MCF 10A (cell line): ENCODE measurements at regions of chr7 and their contacts with region 1.

Region 1: DNA sequence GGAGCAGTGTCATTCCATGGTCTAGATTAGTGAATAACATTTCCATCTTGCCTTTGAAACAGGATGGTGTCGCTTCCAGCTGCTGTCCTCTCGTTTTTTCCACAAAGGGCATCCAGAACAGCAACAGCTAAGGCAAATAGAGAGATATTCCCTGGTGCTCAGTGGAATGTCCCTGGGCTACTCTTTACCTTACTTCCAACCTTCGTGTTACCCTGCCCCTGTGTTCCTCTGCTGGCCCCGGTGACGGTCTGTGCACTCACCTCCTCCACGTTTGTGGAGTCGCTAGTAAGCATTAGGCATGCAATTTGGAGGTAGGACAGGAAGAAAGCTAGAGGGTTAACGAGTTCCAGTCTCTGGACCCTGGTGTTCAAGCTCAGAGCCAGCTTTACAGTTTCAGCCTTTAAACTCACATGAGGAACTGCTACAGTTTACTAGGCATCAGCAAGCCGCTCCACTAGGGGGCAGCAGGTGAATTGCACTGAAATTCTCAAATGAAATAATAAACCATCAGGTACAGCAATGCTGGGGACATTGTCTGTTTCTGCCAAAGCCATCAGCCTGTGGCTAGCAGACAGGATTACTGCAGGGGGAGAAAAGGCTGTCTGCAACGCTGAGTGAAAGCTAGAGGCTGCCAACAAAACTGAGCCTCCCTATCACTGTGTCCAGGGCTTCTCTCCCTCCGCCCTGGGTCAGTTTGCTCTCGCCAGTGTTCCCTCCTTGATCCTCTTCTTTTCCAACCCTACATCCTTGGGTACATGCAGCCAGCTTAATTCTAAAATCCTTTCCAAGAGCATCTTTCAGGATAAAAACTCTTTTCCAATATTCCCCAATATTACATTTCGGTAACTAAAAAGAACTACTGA is 9.0 kb downstream of the MRPL32 start:
- DNase-seq: peak; percentile 76
- H3K4me3 Mint-ChIP-seq: no peak overlapping the region
- H3K27ac Mint-ChIP-seq: no peak overlapping the region
- H3K4me1 Mint-ChIP-seq: no peaks in the 10 kb centered on the region
- H3K27me3 Mint-ChIP-seq: no peaks in the 10 kb centered on the region
- CTCF ChIP-seq: peak; percentile 89

Region 2: GRCh38 chr7:42961170-42961569 is 20.0 kb after region 1 on chr7:
- CTCF ChIA-PET with region 1: interaction called, 10 read pairs
- POLR2A ChIA-PET with region 1: no interaction called
- intact Hi-C with region 1: no loop called
- DNase-seq: no peak
- H3K4me3 Mint-ChIP-seq: no peak overlapping the region
- H3K27ac Mint-ChIP-seq: no peak overlapping the region
- H3K4me1 Mint-ChIP-seq: peaks cover 22% of the 10 kb centered on the region
- H3K27me3 Mint-ChIP-seq: no peaks in the 10 kb centered on the region
- CTCF ChIP-seq: no peak

Region 3: DNA sequence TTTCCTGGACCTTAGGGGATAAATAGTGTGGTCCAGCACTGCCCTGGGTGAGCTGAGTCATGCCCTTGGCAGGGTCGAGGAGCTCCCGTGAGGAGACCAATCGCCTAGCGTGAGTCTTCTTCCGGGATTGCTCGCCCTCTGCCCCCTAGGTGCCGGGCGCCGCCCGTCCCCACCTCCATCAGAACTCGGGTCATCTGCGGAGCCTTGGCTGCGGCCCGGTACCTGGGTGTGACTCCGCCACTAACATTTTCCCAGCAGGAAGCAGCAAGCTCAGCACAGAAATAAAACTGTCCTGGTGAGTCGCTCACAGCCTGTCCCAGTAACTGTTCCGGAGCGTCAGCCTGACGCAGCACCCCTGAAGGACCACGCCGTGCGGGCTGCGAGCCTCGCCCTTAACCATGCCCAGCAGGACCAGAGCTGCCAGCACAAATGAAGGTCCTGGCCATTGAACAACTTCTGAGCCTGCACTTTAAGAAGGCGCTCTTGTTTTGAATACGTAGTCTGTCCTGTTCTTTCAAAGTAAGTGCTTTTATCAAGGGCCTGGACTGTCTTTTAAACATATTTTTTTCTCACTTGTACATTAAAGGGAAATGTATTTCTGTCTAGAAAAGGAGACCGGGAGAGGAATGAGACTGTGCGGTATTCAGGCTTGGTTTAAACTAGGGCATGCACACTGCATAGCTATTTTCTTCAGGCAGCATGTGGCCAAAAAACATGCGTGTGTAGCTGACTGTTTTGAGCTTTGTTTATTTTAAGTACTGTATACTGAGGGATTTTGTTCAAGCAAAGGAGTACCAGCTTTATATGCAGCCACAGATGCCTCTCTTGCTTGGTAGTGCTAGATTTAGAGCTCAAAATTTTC is 308.0 kb after region 1 on chr7:
- CTCF ChIA-PET with region 1: interaction called, 15 read pairs
- POLR2A ChIA-PET with region 1: no interaction called
- intact Hi-C with region 1: no loop called
- DNase-seq: peak; percentile 74
- H3K4me3 Mint-ChIP-seq: no peak overlapping the region
- H3K27ac Mint-ChIP-seq: no peak overlapping the region
- H3K4me1 Mint-ChIP-seq: no peaks in the 10 kb centered on the region
- H3K27me3 Mint-ChIP-seq: peaks cover 20% of the 10 kb centered on the region
- CTCF ChIP-seq: no peak

Region 4: DNA sequence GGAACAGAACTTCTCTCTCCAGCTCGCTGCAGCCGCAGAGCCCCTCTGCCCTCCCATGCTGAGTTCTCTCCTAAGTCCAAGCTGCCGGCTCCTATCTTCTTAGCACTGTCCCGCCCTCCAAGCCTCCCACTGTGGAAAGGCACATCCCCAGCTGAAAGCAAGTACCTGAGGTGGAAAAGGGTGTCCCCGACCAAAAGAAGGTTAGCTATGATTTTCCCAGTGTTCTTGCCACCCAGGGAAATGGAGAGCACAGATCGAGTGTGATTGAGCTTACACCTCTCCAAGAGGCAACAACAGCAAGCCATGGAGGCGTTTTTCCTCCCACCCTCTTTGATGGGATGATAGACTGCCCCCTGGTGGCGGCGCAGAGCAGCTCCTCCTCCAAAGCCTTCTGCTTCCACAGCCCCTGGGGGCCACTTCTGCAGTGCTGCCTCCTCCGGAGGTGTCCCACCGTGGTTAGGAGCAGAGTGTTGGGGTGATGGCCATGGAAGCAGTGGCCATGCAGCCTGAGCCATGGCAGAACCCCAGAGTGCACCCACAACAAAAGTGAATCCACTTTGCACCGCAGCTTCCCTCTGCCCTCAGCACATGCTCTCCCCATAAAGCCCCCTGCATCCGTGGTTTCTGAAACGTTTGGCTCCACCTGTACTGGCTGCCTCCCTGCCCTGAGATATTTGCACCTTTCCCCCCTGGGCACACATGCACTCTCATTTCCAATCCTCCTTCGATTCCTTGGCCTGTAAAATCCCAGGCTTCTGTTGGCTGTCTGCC is 498.6 kb after region 1 on chr7:
- CTCF ChIA-PET with region 1: interaction called, 10 read pairs
- POLR2A ChIA-PET with region 1: no interaction called
- intact Hi-C with region 1: loop called (anchors 1 kb)
- DNase-seq: peak; percentile 64
- H3K4me3 Mint-ChIP-seq: no peak overlapping the region
- H3K27ac Mint-ChIP-seq: no peak overlapping the region
- H3K4me1 Mint-ChIP-seq: no peaks in the 10 kb centered on the region
- H3K27me3 Mint-ChIP-seq: no peaks in the 10 kb centered on the region
- CTCF ChIP-seq: peak; percentile 90

Region 5: DNA sequence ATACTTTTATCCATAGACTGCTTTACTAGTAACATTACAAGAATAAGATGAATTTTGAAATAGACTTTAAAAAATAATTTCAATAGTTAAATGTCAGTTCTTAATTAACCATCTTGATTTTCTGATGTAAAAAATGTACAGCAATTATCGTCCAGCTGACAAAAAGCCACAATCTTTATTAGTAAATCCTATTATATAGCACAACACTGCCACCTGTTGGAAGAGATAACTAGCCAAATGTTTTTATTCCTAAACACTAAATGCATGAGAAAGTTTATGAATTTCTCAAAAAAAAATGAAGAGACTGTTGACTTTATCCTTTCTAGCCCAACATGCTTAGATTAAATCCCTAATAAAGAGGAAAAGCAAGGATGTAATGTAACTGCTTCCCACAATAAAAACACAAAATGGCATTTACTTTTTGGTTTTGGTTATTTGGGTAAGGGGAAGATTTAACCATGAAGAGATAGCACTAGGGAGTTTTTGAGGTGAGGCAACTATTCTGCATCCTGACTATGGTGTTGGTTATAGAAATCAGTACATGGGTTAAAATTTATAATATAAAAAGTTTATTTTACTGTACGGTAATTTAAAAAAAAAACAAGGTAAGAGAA is 780.1 kb after region 1 on chr7:
- CTCF ChIA-PET with region 1: interaction called, 3 read pairs
- POLR2A ChIA-PET with region 1: no interaction called
- intact Hi-C with region 1: loop called (anchors 1 kb)
- DNase-seq: peak; percentile 70
- H3K4me3 Mint-ChIP-seq: no peak overlapping the region
- H3K27ac Mint-ChIP-seq: no peak overlapping the region
- H3K4me1 Mint-ChIP-seq: peaks cover 15% of the 10 kb centered on the region
- H3K27me3 Mint-ChIP-seq: no peaks in the 10 kb centered on the region
- CTCF ChIP-seq: peak; percentile 49